Right ventricle myocardium superior (tissue), 1 donor: ENCODE measurements at regions of chr15 and their contacts with region 1.

Region 1: GRCh38 chr15:31326156-31326732 is 391 bp upstream of the KLF13 start:
- DNase-seq: peak; percentile 99
- ATAC-seq: peak; percentile 84

Region 2: GRCh38 chr15:31215490-31216214 is 110.6 kb before region 1 on chr15:
- intact Hi-C with region 1: loop called (anchors 2 kb)
- DNase-seq: peak; percentile 93
- ATAC-seq: peak; percentile 91

Region 3: DNA sequence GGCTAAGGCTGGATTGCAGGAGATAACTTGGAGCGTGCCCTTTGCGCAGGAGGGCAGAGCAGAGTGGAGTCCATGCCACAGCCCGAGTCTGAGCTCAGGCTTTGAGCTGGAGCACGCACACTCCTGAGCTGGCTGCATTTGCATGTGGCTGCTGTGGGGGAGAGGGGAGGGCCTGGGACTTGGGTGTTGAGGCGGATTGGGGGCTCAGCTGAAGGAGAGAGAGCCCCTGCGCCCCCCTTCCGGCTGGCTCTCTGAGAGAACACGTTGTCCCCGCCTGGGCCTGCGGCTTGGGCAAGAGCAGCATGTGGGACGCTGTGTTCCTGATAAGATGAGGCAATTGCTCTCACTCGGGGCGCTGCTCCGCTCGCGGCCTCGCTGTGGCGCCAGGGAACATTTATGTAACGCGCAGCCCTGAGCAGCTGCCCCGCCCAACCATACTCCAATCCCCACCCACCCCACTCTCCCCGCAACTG is 39.4 kb after region 1 on chr15:
- intact Hi-C with region 1: loop called (anchors 1 kb)
- DNase-seq: peak; percentile 98
- ATAC-seq: peak; percentile 88

Region 4: GRCh38 chr15:31391687-31392671 is 65.7 kb after region 1 on chr15:
- intact Hi-C with region 1: loop called (anchors 5 kb)
- DNase-seq: peak; percentile 94
- ATAC-seq: peak; percentile 84

Region 5: DNA sequence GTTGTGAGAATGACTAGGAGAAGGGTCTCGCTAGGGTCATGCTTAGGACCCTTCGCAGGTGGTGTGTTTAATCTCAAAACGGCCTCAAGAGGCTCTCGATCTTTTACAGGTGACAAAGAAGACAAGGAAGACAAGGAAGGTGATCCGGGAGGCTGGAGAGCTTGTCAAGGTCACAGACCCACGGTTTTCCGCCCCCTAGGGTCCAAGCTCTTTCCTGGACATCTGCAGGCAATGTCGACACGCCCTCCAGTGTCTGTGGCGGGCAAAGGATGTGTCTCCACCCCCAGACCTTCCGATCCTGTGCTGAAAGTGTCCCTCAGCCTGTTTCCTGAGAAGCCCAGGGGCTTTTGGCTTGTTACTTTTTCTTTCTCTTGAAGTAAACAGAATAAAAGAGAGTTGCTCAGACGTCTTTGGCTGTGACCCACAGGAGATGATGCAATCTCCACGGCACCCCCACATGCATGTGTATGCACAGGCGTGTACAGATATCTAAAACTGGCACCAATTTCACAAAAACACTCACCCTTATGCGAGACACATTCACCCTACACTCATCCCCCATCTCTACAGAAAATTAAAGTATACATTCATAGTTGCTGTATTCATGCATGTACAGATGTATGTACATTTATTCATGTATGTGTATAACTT is 109.1 kb after region 1 on chr15:
- intact Hi-C with region 1: loop called (anchors 10 kb)
- DNase-seq: peak; percentile 90
- ATAC-seq: peak; percentile 89

Region 6: GRCh38 chr15:31488426-31489204 is 162.4 kb after region 1 on chr15:
- intact Hi-C with region 1: loop called (anchors 10 kb)
- DNase-seq: peak; percentile 69
- ATAC-seq: peak; percentile 87